GM12878 (cell line): ENCODE measurements at regions of chr14 and their contacts with region 1.

Region 1: DNA sequence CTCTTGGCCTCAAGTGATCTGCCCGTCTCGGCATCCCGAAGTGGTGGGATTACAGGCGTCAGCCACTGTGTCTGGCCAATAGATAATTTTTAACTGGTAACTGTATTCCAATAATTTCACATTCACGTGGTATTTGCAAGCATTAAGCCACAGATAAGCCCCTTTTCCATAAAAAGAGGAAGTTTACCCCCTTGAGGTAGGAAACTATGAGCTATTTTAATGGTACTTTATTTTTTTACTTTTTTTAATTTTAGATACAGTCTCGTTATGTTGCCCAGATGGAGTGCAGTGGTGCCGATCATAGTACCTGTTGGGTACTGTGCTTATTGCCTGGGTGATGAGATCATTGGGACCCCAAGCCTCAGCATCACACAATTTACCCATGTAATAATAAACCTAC is 42.9 kb upstream of the AP4S1 start:
- DNase-seq: no peak
- ATAC-seq: no peak
- H3K4me3 ChIP-seq: no peak overlapping the region
- H3K27ac ChIP-seq: no peak overlapping the region
- H3K4me1 ChIP-seq: 0 out of 2 replicates have a peak, but pooled peaks cover 3% of the 10 kb centered on the region
- H3K27me3 ChIP-seq: no peaks in the 10 kb centered on the region
- CTCF ChIP-seq: no peak
- EP300 ChIP-seq: no peak
- POLR2A ChIP-seq: no peak
- RAD21 ChIP-seq: no peak

Region 2: GRCh38 chr14:30957813-30958370 is 24.6 kb before region 1 on chr14:
- CTCF ChIA-PET with region 1: interaction called, 6 read pairs
- POLR2A ChIA-PET with region 1: no interaction called
- RAD21 ChIA-PET with region 1: interaction called, 11 read pairs
- SMC1A ChIA-PET with region 1: interaction called, 8 read pairs
- in situ Hi-C with region 1: no loop called
- intact Hi-C with region 1: no loop called
- DNase-seq: peak; percentile 21
- ATAC-seq: peak; percentile 73
- H3K4me3 ChIP-seq: no peak overlapping the region
- H3K27ac ChIP-seq: peak overlapping the region; percentile 35; the same call in 1 of the 2 replicates
- H3K4me1 ChIP-seq: peaks cover 18% of the 10 kb centered on the region
- H3K27me3 ChIP-seq: no peaks in the 10 kb centered on the region
- CTCF ChIP-seq: no peak
- EP300 ChIP-seq: no peak
- POLR2A ChIP-seq: no peak
- RAD21 ChIP-seq: no peak

Region 3: GRCh38 chr14:30994681-30995620 is 12.4 kb after region 1 on chr14:
- CTCF ChIA-PET with region 1: interaction called, 20 read pairs
- POLR2A ChIA-PET with region 1: interaction called, 3 read pairs
- RAD21 ChIA-PET with region 1: interaction called, 18 read pairs
- SMC1A ChIA-PET with region 1: interaction called, 4 read pairs
- in situ Hi-C with region 1: no loop called
- intact Hi-C with region 1: no loop called
- DNase-seq: peak; percentile 8
- ATAC-seq: peak; percentile 87
- H3K4me3 ChIP-seq: no peak overlapping the region
- H3K27ac ChIP-seq: peak overlapping the region; percentile 7; the same call in 1 of the 2 replicates
- H3K4me1 ChIP-seq: peaks cover 9% of the 10 kb centered on the region; the same call in 1 of the 2 replicates
- H3K27me3 ChIP-seq: no peaks in the 10 kb centered on the region
- CTCF ChIP-seq: no peak
- EP300 ChIP-seq: peak; percentile 9 to 30; a peak in 2 of 4 replicates
- POLR2A ChIP-seq: no peak
- RAD21 ChIP-seq: no peak

Region 4: GRCh38 chr14:31026395-31027118 is 44.0 kb after region 1 on chr14:
- CTCF ChIA-PET with region 1: interaction called, 20 read pairs
- POLR2A ChIA-PET with region 1: no interaction called
- RAD21 ChIA-PET with region 1: interaction called, 3 read pairs
- SMC1A ChIA-PET with region 1: interaction called, 5 read pairs
- in situ Hi-C with region 1: no loop called
- intact Hi-C with region 1: no loop called
- DNase-seq: peak; percentile 85
- ATAC-seq: peak; percentile 94
- H3K4me3 ChIP-seq: peak overlapping the region; percentile 92
- H3K27ac ChIP-seq: peak overlapping the region; percentile 93
- H3K4me1 ChIP-seq: peaks cover 15% of the 10 kb centered on the region
- H3K27me3 ChIP-seq: no peaks in the 10 kb centered on the region
- CTCF ChIP-seq: no peak
- EP300 ChIP-seq: no peak
- POLR2A ChIP-seq: peak; percentile 63
- RAD21 ChIP-seq: no peak

Region 5: GRCh38 chr14:31078766-31079165 is 96.2 kb after region 1 on chr14:
- CTCF ChIA-PET with region 1: interaction called, 97 read pairs
- POLR2A ChIA-PET with region 1: no interaction called
- RAD21 ChIA-PET with region 1: interaction called, 41 read pairs
- SMC1A ChIA-PET with region 1: interaction called, 34 read pairs
- in situ Hi-C with region 1: loop called (anchors 5 kb)
- intact Hi-C with region 1: loop called (anchors 1 kb)
- DNase-seq: no peak
- ATAC-seq: no peak
- H3K4me3 ChIP-seq: no peak overlapping the region
- H3K27ac ChIP-seq: no peak overlapping the region
- H3K4me1 ChIP-seq: no peaks in the 10 kb centered on the region
- H3K27me3 ChIP-seq: no peaks in the 10 kb centered on the region
- CTCF ChIP-seq: no peak
- EP300 ChIP-seq: no peak
- POLR2A ChIP-seq: no peak
- RAD21 ChIP-seq: no peak

Region 6: GRCh38 chr14:31084385-31084784 is 101.9 kb after region 1 on chr14:
- CTCF ChIA-PET with region 1: interaction called, 97 read pairs
- POLR2A ChIA-PET with region 1: no interaction called
- RAD21 ChIA-PET with region 1: interaction called, 41 read pairs
- SMC1A ChIA-PET with region 1: interaction called, 34 read pairs
- in situ Hi-C with region 1: loop called (anchors 5 kb)
- intact Hi-C with region 1: loop called (anchors 1 kb)
- DNase-seq: no peak
- ATAC-seq: peak; percentile 95
- H3K4me3 ChIP-seq: no peak overlapping the region
- H3K27ac ChIP-seq: no peak overlapping the region
- H3K4me1 ChIP-seq: no peaks in the 10 kb centered on the region
- H3K27me3 ChIP-seq: no peaks in the 10 kb centered on the region
- CTCF ChIP-seq: peak in 2 of 3 experiments; percentile 12 to 15; a peak in 1 of 6 replicates
- EP300 ChIP-seq: no peak
- POLR2A ChIP-seq: no peak
- RAD21 ChIP-seq: peak; percentile 38; the same call in 1 of the 2 replicates